Caco-2 (cell line): ENCODE measurements at regions of chrX and their contacts with region 1.

Region 1: DNA sequence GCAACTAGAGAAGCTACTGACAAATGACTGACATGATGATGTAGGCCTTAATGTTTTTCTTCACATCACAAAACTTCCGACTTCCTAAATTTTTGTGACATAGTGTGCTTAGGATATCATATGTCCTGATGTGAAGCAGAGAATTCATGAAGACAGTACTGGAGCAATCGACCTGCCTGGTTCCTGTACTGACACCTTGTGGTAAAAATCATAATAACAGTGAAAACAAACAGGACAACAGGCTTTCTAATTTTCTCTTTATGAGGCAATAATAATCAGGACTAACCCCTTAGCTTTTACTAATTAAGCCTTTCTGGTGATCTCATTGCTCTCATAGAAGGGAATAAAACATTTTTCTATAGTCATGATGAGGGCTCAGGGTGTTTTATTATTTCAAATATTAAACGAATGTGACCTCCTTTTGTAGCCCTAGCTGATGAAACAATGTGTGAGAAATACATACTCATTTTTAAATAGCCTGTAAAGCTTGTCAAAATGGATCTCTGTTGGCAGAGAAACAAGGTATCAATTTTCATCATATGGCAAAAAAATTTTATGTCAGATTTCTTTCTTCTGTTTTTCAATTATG is 158.4 kb downstream of the TENT5D start:
- DNase-seq: peak in 1 of 2 experiments; percentile 8
- H3K4me3 ChIP-seq: no peak overlapping the region
- H3K4me3 Mint-ChIP-seq: no peak overlapping the region
- H3K27ac Mint-ChIP-seq: no peak overlapping the region
- H3K4me1 ChIP-seq: no peaks in the 10 kb centered on the region
- H3K4me1 Mint-ChIP-seq: no peaks in the 10 kb centered on the region
- H3K27me3 ChIP-seq: no peaks in the 10 kb centered on the region
- H3K27me3 Mint-ChIP-seq: peaks cover 4% of the 10 kb centered on the region
- CTCF ChIP-seq: peak; percentile 13 to 37

Region 2: DNA sequence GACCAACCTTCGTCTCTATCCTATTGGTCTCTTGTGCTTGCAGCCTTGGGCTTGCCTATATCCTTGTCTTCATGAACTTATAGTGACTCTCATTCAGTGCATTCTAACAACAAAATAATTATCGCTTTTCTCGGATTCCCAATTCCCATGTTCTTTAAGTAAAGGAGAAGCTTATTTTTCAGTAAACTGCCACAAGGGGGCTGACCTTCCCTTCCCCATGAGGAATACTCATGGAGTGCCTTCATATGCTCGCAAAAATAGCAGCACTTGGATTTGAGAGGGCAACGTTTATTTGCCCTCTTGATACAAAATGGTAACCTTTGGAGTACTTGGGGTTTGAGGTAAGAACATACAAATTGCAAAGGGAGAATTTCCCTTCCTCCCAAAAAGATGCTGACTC is 341.5 kb before region 1 on chrX:
- CTCF ChIA-PET with region 1: no interaction called
- POLR2A ChIA-PET with region 1: no interaction called
- intact Hi-C with region 1: loop called (anchors 5 kb)
- DNase-seq: no peak
- H3K4me3 ChIP-seq: no peak overlapping the region
- H3K4me3 Mint-ChIP-seq: no peak overlapping the region
- H3K27ac Mint-ChIP-seq: no peak overlapping the region
- H3K4me1 ChIP-seq: no peaks in the 10 kb centered on the region
- H3K4me1 Mint-ChIP-seq: no peaks in the 10 kb centered on the region
- H3K27me3 ChIP-seq: no peaks in the 10 kb centered on the region
- H3K27me3 Mint-ChIP-seq: no peaks in the 10 kb centered on the region
- CTCF ChIP-seq: no peak

Region 3: GRCh38 chrX:80430826-80431504 is 147.6 kb before region 1 on chrX:
- CTCF ChIA-PET with region 1: no interaction called
- POLR2A ChIA-PET with region 1: no interaction called
- intact Hi-C with region 1: loop called (anchors 5 kb)
- DNase-seq: peak in 1 of 2 experiments; percentile 2
- H3K4me3 ChIP-seq: no peak overlapping the region
- H3K4me3 Mint-ChIP-seq: no peak overlapping the region
- H3K27ac Mint-ChIP-seq: no peak overlapping the region
- H3K4me1 ChIP-seq: no peaks in the 10 kb centered on the region
- H3K4me1 Mint-ChIP-seq: no peaks in the 10 kb centered on the region
- H3K27me3 ChIP-seq: no peaks in the 10 kb centered on the region
- H3K27me3 Mint-ChIP-seq: no peaks in the 10 kb centered on the region
- CTCF ChIP-seq: no peak

Region 4: GRCh38 chrX:80556148-80556547 is 22.5 kb before region 1 on chrX:
- CTCF ChIA-PET with region 1: no interaction called
- POLR2A ChIA-PET with region 1: no interaction called
- intact Hi-C with region 1: no loop called
- DNase-seq: no peak
- H3K4me3 ChIP-seq: no peak overlapping the region
- H3K4me3 Mint-ChIP-seq: no peak overlapping the region
- H3K27ac Mint-ChIP-seq: no peak overlapping the region
- H3K4me1 ChIP-seq: no peaks in the 10 kb centered on the region
- H3K4me1 Mint-ChIP-seq: no peaks in the 10 kb centered on the region
- H3K27me3 ChIP-seq: no peaks in the 10 kb centered on the region
- H3K27me3 Mint-ChIP-seq: no peaks in the 10 kb centered on the region
- CTCF ChIP-seq: no peak